ENCODE measurements at regions of chrX and their contacts with region 1.

Region 1: GRCh38 chrX:83771664-83772063 is 89.3 kb upstream of the CYLC1 start:
- DNase-seq: no peak
- H3K4me3 ChIP-seq: no peak overlapping the region
- H3K4me3 Mint-ChIP-seq: no peak overlapping the region
- H3K27ac Mint-ChIP-seq: no peak overlapping the region
- H3K4me1 ChIP-seq: no peaks in the 10 kb centered on the region
- H3K4me1 Mint-ChIP-seq: no peaks in the 10 kb centered on the region
- H3K27me3 ChIP-seq: no peaks in the 10 kb centered on the region
- H3K27me3 Mint-ChIP-seq: peaks cover 2% of the 10 kb centered on the region
- CTCF ChIP-seq: no peak

Region 2: GRCh38 chrX:83845397-83845796 is 73.7 kb after region 1 on chrX:
- CTCF ChIA-PET with region 1: no interaction called
- POLR2A ChIA-PET with region 1: no interaction called
- intact Hi-C with region 1: loop called (anchors 5 kb)
- DNase-seq: peak; percentile 10 to 33
- H3K4me3 ChIP-seq: no peak overlapping the region
- H3K4me3 Mint-ChIP-seq: no peak overlapping the region
- H3K27ac Mint-ChIP-seq: no peak overlapping the region
- H3K4me1 ChIP-seq: no peaks in the 10 kb centered on the region
- H3K4me1 Mint-ChIP-seq: no peaks in the 10 kb centered on the region
- H3K27me3 ChIP-seq: no peaks in the 10 kb centered on the region
- H3K27me3 Mint-ChIP-seq: no peaks in the 10 kb centered on the region
- CTCF ChIP-seq: peak; percentile 37 to 46

Region 3: GRCh38 chrX:84044051-84044450 is 272.4 kb after region 1 on chrX:
- CTCF ChIA-PET with region 1: no interaction called
- POLR2A ChIA-PET with region 1: no interaction called
- intact Hi-C with region 1: no loop called
- DNase-seq: no peak
- H3K4me3 ChIP-seq: no peak overlapping the region
- H3K4me3 Mint-ChIP-seq: no peak overlapping the region
- H3K27ac Mint-ChIP-seq: no peak overlapping the region
- H3K4me1 ChIP-seq: no peaks in the 10 kb centered on the region
- H3K4me1 Mint-ChIP-seq: peaks cover 7% of the 10 kb centered on the region
- H3K27me3 ChIP-seq: no peaks in the 10 kb centered on the region
- H3K27me3 Mint-ChIP-seq: no peaks in the 10 kb centered on the region
- CTCF ChIP-seq: no peak